Panc1 (cell line): ENCODE measurements at regions of chr4 and their contacts with region 1.

Region 1: GRCh38 chr4:83552924-83553323 is 17.0 kb downstream of the GPAT3 start:
- DNase-seq: no peak
- ATAC-seq: no peak
- H3K4me3 ChIP-seq: no peak overlapping the region
- H3K27ac ChIP-seq: peak overlapping the region; percentile 34; the same call in 1 of the 2 replicates
- H3K4me1 ChIP-seq: peaks cover 29% of the 10 kb centered on the region
- H3K27me3 ChIP-seq: no peaks in the 10 kb centered on the region
- CTCF ChIP-seq: no peak

Region 2: GRCh38 chr4:82890901-82891706 is 661.8 kb before region 1 on chr4 and contains the start of gene SEC31A:
- CTCF ChIA-PET with region 1: no interaction called
- POLR2A ChIA-PET with region 1: no interaction called
- in situ Hi-C with region 1: no loop called
- intact Hi-C with region 1: loop called (anchors 10 kb)
- DNase-seq: peak; percentile 48
- ATAC-seq: peak; percentile 94
- H3K4me3 ChIP-seq: peak within 1 kb of the TSS; percentile 87 to 90
- H3K27ac ChIP-seq: peak within 1 kb of the TSS; percentile 93
- H3K4me1 ChIP-seq: peaks cover 27% of the 10 kb centered on the region
- H3K27me3 ChIP-seq: no peaks in the 10 kb centered on the region
- CTCF ChIP-seq: no peak
- total RNA-seq, gene SEC31A: 107 TPM

Region 3: DNA sequence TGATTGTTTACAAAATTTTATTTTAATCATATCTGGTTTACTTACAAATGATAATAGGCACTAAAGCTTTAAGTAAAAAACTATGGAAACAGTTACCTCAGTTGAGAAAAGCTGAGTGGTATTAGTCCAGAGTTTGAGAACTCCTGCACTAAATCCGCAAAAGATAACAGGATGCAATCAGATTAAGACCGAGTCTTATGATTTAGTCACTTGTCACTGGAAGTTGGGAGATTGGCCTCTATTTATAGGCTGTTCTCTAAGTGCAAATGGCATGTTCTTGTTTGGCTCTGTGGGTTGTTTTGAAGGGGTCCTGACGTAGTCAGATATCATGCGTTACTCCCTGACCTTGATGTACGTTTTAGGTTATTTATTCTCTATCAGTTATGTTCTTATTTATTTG is 10.7 kb before region 1 on chr4:
- CTCF ChIA-PET with region 1: no interaction called
- POLR2A ChIA-PET with region 1: no interaction called
- in situ Hi-C with region 1: no loop called
- intact Hi-C with region 1: no loop called
- DNase-seq: no peak
- ATAC-seq: no peak
- H3K4me3 ChIP-seq: no peak overlapping the region
- H3K27ac ChIP-seq: no peak overlapping the region
- H3K4me1 ChIP-seq: peaks cover 15% of the 10 kb centered on the region
- H3K27me3 ChIP-seq: no peaks in the 10 kb centered on the region
- CTCF ChIP-seq: no peak